Head of caudate nucleus (tissue), 42 donors: ENCODE measurements at regions of chr7 and their contacts with region 1.

Region 1: GRCh38 chr7:108525985-108526767 is at the start of gene PNPLA8:
- DNase-seq: peak; percentile 100

Region 2: DNA sequence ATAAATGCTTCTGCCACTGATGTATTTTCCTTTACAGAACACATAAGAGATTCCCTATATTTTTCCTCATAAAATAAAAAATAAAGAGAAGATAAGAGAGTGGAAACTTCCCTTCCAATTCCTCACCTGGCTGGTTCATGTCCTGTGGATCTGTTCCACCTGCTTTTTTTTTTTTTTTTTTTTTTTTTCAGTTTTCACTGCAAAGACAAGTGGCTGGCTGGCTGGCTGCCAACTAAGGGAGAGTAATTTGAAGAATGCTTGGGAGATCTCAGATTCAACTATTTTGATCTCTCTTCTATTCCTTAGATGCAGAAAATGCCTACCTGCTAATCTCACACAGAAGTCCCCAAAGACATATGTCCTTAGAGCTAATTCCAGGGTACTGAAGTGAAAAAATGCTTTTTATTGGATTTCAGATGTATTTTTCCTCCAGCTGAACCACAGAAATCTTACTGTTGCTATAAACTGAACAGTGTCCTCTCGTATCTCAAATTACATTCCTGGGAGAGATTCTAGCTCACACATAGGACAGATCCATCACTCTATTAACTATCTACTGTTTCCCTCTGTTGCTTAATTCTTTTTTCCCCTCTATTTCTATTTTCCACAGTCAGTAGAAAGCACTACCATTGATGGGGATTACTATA is 190.8 kb before region 1 on chr7:
- intact Hi-C with region 1: no loop called
- DNase-seq: peak in 18 of 42 donors; percentile 13 to 65 (median 32)

Region 3: GRCh38 chr7:108368466-108368865 is 157.7 kb before region 1 on chr7:
- intact Hi-C with region 1: no loop called
- DNase-seq: no peak

Region 4: GRCh38 chr7:108497082-108497725 is 29.0 kb before region 1 on chr7:
- intact Hi-C with region 1: no loop called
- DNase-seq: peak in 29 of 42 donors; percentile 3 to 79 (median 41)

Region 5: GRCh38 chr7:108569381-108570145 is 43.4 kb after region 1 on chr7 and contains the starts of genes DNAJB9 and THAP5:
- intact Hi-C with region 1: loop called (anchors 2 kb)
- DNase-seq: peak; percentile 99 to 100 (median 100)

Region 6: GRCh38 chr7:109101332-109101731 is 575.2 kb after region 1 on chr7:
- intact Hi-C with region 1: no loop called
- DNase-seq: no peak